Right ventricle myocardium superior (tissue), 1 donor: ENCODE measurements at regions of chr4 and their contacts with region 1.

Region 1: GRCh38 chr4:184168406-184169019 is 49.2 kb downstream of the ENPP6 start:
- DNase-seq: peak; percentile 88
- ATAC-seq: peak; percentile 99

Region 2: DNA sequence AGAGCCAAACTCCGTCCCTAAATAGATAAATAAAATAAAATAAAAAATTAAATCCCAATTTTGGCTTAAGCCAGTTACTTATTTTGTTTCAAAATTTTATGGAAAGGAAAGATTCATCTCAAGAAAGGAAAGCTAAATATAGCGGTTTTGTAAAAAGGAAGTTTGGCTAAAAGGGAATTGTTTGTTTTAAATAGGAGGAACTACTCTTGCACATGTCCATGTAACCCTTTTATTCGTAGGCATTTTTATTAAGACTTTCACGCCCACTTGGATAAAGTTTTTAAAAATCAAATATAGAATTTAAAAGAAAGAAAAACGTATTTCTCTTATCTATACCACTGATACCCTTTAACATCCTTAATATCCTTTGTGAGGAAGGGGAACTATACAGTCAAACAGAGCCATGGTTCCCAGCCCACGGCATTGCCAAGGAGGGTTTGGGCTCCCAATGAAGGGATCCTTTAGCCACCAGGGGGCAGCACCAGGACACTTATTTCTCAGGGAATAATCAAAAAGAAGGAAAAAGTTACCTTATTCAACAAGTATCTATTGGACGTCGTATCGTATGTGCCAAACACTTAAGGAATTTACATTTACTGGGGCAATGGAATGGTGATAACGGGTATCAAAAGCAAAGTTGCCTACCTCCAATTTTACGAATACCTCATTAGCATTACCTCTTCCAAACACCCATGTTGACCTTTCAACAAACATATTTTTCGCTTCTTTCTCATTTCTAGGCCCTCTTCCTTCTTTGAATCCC is 696.4 kb before region 1 on chr4:
- intact Hi-C with region 1: loop called (anchors 5 kb)
- DNase-seq: peak; percentile 90
- ATAC-seq: peak; percentile 94

Region 3: GRCh38 chr4:183840311-183840710 is 328.2 kb before region 1 on chr4:
- intact Hi-C with region 1: loop called (anchors 2 kb)
- DNase-seq: peak; percentile 85
- ATAC-seq: peak; percentile 86

Region 4: DNA sequence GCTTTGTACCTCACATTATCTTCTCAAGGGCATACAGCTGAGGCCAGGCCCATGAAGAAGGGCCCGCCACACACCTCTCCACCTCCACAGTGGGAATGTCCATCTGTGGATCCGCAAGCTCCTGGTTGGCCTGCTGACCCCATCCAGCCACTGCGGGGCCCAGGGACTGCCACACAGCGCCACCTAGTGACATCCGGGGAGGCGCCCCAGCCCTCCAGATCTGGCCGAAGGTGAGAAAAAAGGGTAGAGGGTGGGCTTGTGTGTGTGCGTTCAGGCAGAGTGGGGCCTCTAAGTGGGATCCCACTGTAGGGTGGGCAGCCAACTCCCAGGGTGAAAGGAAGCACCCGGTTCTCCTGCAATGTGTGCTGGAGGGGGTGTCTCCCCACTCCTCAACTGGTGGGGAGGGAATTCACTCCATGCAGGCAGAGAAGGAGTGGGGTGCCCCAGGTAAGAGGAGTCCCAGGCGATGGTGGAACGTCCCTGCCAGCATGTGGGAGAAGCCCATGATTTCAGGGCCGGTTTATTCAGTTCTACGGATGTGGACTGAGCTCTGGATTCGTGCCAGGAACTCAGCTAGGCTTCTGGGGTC is 68.1 kb before region 1 on chr4:
- intact Hi-C with region 1: loop called (anchors 5 kb)
- DNase-seq: peak; percentile 79
- ATAC-seq: peak; percentile 86

Region 5: GRCh38 chr4:184114431-184114830 is 54.1 kb before region 1 on chr4:
- intact Hi-C with region 1: no loop called
- DNase-seq: no peak
- ATAC-seq: no peak

Region 6: GRCh38 chr4:184215709-184216328 is 47.3 kb after region 1 on chr4:
- intact Hi-C with region 1: no loop called
- DNase-seq: no peak
- ATAC-seq: no peak

Region 7: DNA sequence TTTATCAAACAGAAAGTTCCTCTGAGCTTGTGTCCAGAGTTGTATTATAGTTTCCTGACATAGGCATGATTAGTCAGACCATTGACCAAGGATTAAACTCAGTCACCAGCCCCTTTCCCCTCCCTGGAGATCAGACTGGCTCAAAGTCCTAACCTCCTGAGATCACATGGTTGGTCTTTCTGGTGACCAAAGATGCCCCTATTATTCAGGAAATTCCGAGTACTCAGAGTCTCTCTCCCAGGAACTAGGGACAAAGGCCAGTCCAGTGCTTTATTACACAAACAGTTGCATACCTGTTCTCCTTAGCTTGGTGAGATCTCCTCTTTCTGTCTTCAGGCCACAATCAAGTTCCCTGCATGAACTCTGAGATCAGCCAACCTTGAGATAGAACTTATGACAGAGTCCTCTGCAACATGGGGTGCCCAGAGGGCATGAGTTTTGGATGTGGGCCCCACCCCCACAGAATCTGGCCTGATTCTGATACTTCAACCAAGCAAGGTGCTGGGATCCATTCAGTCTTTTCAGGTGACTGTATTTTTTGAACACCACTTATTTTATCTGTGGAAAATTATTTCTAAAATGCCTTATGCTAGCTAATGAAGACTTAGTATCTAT is 63.8 kb after region 1 on chr4:
- intact Hi-C with region 1: no loop called
- DNase-seq: no peak
- ATAC-seq: no peak